GM10248 (cell line): ENCODE measurements at regions of chr4 and their contacts with region 1.

Region 1: DNA sequence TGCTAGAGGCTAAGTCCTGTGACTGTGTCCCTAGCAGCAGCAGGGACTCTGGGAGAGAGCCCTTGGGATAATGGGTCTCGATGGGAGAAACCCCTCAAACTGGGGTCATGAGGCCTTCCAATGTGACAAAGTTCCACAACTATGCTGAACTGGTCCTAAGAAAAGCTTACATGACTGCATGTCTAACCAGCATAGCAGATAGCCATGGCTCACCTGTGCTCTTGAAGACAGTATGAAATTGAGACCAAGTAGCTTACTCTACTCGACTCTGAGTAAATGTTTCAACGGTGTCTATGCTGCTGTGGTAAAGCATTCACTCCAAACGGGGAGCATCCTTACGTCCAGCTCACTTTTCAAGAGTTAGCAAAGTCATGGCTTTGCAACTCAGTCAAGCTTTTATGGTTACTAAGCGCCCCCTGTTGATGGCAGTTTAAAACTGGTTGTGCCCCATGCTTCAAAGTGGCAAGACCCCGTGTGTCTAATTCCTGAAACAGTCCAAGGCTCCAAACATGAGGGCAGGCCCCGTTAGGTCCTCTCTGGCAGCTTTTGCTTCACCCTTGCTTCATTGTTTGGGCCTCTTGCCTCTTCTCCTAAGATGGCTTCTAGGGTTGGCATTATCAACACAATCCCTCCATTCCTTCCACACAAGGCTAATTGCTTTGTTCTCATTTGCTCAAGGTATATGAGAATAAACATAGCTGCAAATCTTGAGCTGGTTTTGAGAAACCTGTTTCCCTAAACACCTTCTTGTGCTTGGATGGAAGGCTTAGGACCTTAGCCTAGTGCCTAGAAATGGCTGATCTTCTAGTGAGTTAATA is 46.6 kb downstream of the CCNG2 start:
- DNase-seq: peak; percentile 59
- CTCF ChIP-seq: peak; percentile 80

Region 2: DNA sequence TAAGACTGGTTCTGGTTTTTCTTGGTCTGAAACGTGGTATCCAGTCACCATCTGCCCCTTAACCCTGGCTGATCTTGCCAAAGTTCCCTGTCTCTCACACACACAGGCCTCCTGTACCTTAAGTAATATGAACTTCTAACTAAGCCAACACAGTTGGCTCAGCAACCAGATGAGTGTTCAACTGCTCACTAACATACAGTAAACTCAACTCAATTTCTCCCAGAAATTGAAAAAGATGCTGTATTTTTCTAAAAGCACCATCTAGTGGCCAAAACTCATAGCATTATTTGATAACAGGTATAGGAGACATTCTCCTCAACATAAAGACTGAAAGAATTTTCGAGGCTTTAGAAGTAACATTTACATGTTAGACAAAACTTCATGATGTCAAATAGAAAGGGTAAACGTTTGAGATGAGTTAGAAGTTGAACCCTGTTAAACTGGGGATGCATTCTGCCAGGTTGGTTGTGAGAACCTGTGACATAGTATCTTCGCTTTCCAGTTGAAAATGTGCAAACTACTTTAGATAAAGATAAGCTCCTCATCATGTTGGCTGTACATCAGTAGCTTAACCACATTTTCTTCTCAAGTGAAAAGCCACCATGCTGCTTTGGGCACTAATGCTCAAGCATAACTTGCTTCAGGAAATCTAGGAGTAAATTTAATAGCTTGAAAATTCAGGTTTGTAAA is 159.0 kb before region 1 on chr4:
- CTCF ChIA-PET with region 1: interaction called, 72 read pairs
- POLR2A ChIA-PET with region 1: no interaction called
- DNase-seq: peak; percentile 24
- CTCF ChIP-seq: peak; percentile 64

Region 3: DNA sequence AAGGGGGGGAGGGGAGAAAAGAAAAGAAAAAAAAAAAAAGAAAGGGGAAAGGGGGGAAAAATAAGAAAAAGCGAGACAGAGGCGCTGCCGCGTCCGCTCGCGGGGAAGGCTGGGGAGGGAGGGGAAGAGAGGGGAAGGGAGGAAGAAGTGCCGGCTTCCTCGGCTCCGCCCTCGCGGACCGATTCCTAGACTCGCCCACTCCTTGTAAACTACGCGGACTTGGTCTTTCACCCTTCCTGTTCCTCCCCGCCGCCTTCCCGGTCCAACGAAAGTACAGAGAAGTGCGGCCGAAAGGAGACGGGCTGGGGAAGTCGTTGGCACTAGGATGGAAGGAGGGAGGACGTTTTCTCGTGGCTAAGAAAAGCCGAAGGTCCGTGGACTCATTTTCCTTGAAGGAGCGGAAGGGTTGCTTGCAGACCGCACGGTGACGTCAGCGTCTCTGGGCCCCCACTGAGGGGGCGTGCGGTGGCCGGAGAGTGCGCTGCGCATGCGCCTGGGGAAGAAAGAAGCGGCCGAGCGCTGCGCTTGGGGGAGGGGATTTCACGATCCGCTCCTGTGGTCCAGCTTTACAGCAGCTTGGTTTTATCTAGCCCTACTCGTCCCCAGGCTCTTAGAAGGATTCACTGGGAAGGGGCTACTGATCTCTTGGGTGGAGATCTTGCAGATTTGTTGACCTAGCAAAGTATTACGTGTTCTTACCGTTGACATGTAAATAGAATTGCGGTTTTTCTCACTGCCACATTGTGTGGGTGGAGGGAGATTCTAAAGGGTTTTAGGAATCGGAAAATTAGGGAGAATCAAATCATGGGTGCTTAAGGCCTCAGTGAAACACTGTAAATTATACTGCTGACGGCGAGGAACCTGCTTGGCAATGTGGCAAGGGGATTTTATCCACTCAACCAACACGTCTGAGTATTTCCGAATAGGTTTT is 127.5 kb before region 1 on chr4 and contains the start of gene CCNI:
- CTCF ChIA-PET with region 1: interaction called, 15 read pairs
- POLR2A ChIA-PET with region 1: interaction called, 3 read pairs
- DNase-seq: peak; percentile 91
- CTCF ChIP-seq: no peak

Region 4: GRCh38 chr4:77095101-77095821 is 108.3 kb before region 1 on chr4:
- CTCF ChIA-PET with region 1: interaction called, 275 read pairs
- POLR2A ChIA-PET with region 1: no interaction called
- DNase-seq: peak; percentile 69
- CTCF ChIP-seq: peak; percentile 80

Region 5: GRCh38 chr4:77126809-77127208 is 76.8 kb before region 1 on chr4:
- CTCF ChIA-PET with region 1: interaction called, 95 read pairs
- POLR2A ChIA-PET with region 1: no interaction called
- DNase-seq: peak; percentile 61
- CTCF ChIP-seq: no peak

Region 6: GRCh38 chr4:77177199-77177598 is 26.4 kb before region 1 on chr4:
- CTCF ChIA-PET with region 1: interaction called, 35 read pairs
- POLR2A ChIA-PET with region 1: no interaction called
- DNase-seq: no peak
- CTCF ChIP-seq: no peak

Region 7: GRCh38 chr4:77488882-77489281 is 285.3 kb after region 1 on chr4:
- CTCF ChIA-PET with region 1: no interaction called
- POLR2A ChIA-PET with region 1: no interaction called
- DNase-seq: no peak
- CTCF ChIP-seq: no peak